CD14-positive monocyte (primary cell): ENCODE measurements at regions of chr11 and their contacts with region 1.

Region 1: DNA sequence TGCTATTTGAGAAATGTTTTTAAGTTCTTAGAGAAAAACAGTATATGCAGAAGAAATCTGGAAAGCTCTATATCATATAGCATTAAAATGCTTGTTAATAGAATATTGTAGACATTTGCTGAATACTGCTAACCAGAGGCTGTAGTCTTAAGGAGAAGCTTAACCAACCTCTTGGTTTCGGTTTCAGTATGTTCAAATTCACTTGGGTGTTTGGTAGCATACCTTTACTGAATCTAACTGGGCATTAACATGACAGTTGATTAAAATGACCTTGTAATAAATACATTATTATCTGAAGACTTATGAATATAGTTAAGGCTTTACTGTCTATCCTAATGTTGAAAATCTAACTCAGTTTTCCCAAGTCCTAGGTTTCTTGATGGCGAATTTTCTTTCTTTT is 5.4 kb downstream of the PCF11 start:
- DNase-seq: peak in 1 of 3 donors; percentile 33
- H3K4me3 ChIP-seq: no peak overlapping the region
- H3K4me3 Mint-ChIP-seq: peak overlapping the region in 1 of 2 donors; percentile 12
- H3K27ac ChIP-seq: peak overlapping the region in 1 of 2 donors; percentile 34
- H3K27ac Mint-ChIP-seq: peak overlapping the region; percentile 25 to 80 (median 72)
- H3K4me1 ChIP-seq: peaks cover 25 to 42% of the 10 kb centered on the region in 2 donors
- H3K4me1 Mint-ChIP-seq: peaks cover 28% of the 10 kb centered on the region
- H3K27me3 ChIP-seq: no peaks in the 10 kb centered on the region
- H3K27me3 Mint-ChIP-seq: no peaks in the 10 kb centered on the region
- CTCF ChIP-seq: no peak

Region 2: DNA sequence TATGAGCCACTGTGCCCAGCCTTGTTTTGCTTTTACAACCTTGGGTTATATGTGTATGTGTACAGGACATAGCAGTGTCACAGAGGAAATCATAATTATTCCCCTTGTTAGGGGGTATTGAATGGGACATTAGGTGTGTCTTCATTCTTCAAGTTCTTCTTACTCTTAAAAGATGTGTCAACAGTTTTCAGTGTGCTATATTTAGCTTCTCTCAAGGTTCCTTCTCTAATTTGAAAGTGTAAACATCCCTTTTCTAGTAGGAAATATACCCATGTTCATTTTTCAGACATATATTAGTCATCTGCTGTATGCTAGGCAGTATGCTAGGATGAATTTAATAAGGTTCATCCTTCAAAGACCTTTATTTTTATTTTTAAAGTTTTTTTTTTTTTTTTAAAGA is 11.6 kb after region 1 on chr11:
- intact Hi-C with region 1: loop called in 1 of 2 experiments (anchors 1 kb)
- DNase-seq: peak; percentile 25 to 60 (median 42)
- H3K4me3 ChIP-seq: peak overlapping the region in 1 of 3 experiments; percentile 16
- H3K4me3 Mint-ChIP-seq: peak overlapping the region in 1 of 2 donors; percentile 42
- H3K27ac ChIP-seq: peak overlapping the region; percentile 54 to 61
- H3K27ac Mint-ChIP-seq: peak overlapping the region; percentile 43 to 87 (median 77)
- H3K4me1 ChIP-seq: peaks cover 48 to 55% of the 10 kb centered on the region in 2 donors
- H3K4me1 Mint-ChIP-seq: peaks cover 42% of the 10 kb centered on the region
- H3K27me3 ChIP-seq: no peaks in the 10 kb centered on the region
- H3K27me3 Mint-ChIP-seq: no peaks in the 10 kb centered on the region
- CTCF ChIP-seq: no peak